ENCODE measurements at regions of chr11 and their contacts with region 1.

Region 1: DNA sequence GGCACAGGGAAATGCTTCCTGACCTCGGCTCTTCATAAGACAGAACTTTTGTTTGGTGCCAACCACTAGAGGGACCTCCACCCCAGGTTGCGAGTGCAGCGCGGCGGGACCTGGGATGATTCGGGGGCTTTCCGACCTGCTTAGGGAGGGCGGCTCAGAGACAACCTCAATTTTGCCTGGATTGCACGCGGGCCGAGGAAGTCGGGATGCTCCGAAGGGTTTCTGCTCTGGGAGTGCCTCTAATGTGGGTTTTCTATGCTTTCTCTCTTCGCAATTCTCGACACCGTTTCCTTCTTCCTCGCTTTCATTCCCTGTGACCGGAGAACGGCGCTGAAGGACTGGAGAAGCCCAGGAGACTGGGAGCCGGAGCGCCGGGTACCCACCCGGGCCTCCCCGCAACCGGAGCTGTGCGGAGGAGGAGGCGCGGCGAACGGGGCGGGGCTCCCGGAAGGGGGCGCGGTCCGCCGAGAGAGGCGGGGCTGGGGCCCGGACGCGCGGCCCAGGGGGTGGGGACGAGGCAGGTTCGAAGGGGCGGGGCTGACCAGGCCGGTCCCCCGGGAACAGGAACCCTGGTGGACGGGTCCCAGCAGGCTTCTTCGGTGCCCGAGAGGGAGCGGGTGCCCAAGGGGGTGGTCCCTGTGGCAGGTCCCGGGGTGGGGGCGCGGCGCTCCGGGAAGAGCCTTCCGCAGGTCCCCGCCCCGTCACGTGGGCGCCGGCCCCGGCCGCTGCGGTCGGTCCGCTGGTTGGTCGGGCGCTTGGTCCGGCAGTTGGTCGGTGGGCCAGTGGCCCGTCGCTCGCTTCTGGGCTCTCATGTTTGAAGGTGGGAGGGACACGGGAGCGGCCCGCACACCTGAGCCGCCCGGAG is at the start of gene PPFIBP2:
- DNase-seq: peak; percentile 86
- H3K4me3 ChIP-seq: peak within 1 kb of the TSS; percentile 97
- H3K27ac ChIP-seq: peak within 1 kb of the TSS; percentile 97
- H3K4me1 ChIP-seq: peaks cover 57% of the 10 kb centered on the region
- CTCF ChIP-seq: peak; percentile 88
- total RNA-seq, gene PPFIBP2: 102 and 129 TPM in 2 replicates

Region 2: GRCh38 chr11:6926208-6927029 is 587.0 kb before region 1 on chr11 and contains the start of gene ZNF215:
- CTCF ChIA-PET with region 1: no interaction called
- POLR2A ChIA-PET with region 1: no interaction called
- intact Hi-C with region 1: loop called (anchors 1 kb)
- DNase-seq: peak; percentile 94
- H3K4me3 ChIP-seq: peak within 1 kb of the TSS; percentile 95
- H3K27ac ChIP-seq: peak within 1 kb of the TSS; percentile 95
- H3K4me1 ChIP-seq: peaks cover 37% of the 10 kb centered on the region
- CTCF ChIP-seq: no peak
- total RNA-seq, gene ZNF215: 59.8 and 67.2 TPM in 2 replicates

Region 3: DNA sequence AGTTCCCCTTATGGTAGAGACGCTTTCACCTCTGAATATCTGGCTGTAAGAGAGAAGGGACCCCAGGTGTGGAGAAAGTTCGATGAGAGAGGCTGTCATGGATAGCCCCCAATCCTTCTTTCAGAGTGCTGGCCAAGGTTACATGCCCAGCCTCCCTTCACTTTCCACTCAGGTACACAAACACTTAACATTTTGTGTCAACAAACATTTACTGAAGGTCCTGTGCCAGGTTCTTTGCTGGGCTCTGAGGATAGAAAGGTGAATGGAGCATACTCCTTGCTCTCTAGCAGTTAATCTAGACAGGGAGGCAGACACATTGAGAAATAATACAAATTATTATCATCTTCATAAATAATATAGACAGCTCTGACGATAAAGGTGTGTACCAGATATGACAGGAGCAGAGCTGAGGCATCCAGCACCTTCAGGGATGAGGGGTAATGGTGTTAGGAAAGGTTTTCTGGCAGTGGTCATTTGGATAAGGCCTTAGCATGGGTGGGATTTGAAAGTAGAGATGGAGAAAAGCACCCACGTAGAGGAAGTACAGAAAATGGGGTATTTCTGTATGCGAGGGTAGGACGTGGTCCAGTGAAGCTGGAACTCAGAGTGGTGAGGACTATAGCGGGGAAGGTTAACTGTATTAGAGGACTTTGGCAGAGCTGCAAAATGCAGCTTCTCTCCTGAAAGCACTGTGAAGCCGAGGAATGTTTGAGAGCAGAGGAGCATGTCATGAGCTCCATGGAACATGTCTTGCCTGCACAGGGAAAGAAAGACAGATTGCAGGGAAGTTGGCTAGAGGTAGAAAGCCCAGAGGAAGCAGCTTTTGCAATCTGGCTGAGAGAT is 20.0 kb after region 1 on chr11:
- CTCF ChIA-PET with region 1: interaction called, 3 read pairs
- POLR2A ChIA-PET with region 1: interaction called, 14 read pairs
- intact Hi-C with region 1: no loop called
- DNase-seq: no peak
- H3K4me3 ChIP-seq: peak overlapping the region; percentile 11
- H3K27ac ChIP-seq: peak overlapping the region; percentile 13
- H3K4me1 ChIP-seq: peaks cover 59% of the 10 kb centered on the region
- CTCF ChIP-seq: no peak

Region 4: GRCh38 chr11:7665473-7666291 is 152.2 kb after region 1 on chr11:
- CTCF ChIA-PET with region 1: no interaction called
- POLR2A ChIA-PET with region 1: no interaction called
- intact Hi-C with region 1: loop called (anchors 1 kb)
- DNase-seq: peak; percentile 83
- H3K4me3 ChIP-seq: no peak overlapping the region
- H3K27ac ChIP-seq: no peak overlapping the region
- H3K4me1 ChIP-seq: no peaks in the 10 kb centered on the region
- CTCF ChIP-seq: peak; percentile 90

Region 5: GRCh38 chr11:8688414-8689362 is 1175.2 kb after region 1 on chr11:
- CTCF ChIA-PET with region 1: no interaction called
- POLR2A ChIA-PET with region 1: no interaction called
- intact Hi-C with region 1: loop called (anchors 10 kb)
- DNase-seq: peak; percentile 98
- H3K4me3 ChIP-seq: peak overlapping the region; percentile 88
- H3K27ac ChIP-seq: peak overlapping the region; percentile 93
- H3K4me1 ChIP-seq: peaks cover 53% of the 10 kb centered on the region
- CTCF ChIP-seq: peak; percentile 42